Calu3 (cell line): ENCODE measurements at regions of chr10 and their contacts with region 1.

Region 1: DNA sequence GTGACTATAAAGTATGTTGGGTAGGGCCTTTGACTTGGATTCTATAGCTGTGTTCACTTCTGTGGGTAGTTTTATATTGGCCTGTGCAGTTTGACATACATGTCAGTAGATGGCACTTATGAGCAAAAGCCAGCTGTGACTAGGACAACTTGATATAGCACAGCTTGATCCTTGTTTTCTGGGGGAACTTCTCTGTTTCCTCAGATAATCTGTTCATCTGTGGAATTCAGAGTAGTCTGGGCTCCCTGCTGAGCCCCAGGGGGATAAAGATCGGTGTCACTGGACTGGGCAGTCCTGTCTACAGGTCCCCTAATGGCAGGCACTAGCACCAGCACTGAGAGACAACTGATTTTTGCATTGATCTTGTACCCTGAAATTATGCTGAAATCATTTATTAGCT is 25.4 kb downstream of the CYP2C9 start:
- DNase-seq: peak; percentile 6
- H3K4me3 Mint-ChIP-seq: no peak overlapping the region
- H3K27ac Mint-ChIP-seq: no peak overlapping the region
- H3K4me1 Mint-ChIP-seq: peaks cover 9% of the 10 kb centered on the region
- H3K27me3 Mint-ChIP-seq: no peaks in the 10 kb centered on the region
- CTCF ChIP-seq: peak; percentile 52

Region 2: DNA sequence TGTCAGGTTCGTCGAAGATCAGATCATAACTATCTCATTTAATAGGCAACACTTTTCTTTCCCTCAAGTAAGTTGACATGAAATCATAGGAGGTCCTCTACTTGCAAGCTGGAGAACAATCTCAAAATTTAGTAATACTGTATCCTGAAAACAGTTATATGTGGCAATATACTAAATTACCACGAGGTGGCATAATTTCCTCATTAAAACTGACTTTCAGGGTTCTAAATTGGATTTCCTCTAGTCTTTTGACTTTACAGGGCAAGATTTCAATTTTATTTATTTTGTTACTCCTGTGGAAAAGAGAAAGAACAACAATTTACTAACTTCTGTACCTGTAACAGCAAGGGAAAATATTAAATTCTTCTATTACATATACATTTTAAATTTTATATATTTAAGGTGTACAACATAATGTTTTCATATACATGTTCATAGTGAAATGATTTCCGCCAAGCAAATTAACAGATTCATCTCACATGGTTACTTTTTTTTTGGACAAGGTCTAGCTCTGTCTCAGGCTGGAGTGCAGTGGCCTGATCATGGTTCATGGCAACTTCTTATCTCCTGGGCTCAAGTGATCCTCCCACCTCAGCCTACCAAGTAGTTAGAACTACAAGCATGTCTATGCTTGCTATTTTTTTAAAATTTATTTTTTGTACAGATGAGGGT is 333.7 kb before region 1 on chr10:
- CTCF ChIA-PET with region 1: no interaction called
- intact Hi-C with region 1: loop called (anchors 5 kb)
- DNase-seq: no peak
- H3K4me3 Mint-ChIP-seq: no peak overlapping the region
- H3K27ac Mint-ChIP-seq: no peak overlapping the region
- H3K4me1 Mint-ChIP-seq: no peaks in the 10 kb centered on the region
- H3K27me3 Mint-ChIP-seq: no peaks in the 10 kb centered on the region
- CTCF ChIP-seq: no peak